ENCODE measurements at regions of chr20 and their contacts with region 1.

Region 1: GRCh38 chr20:50790651-50791277 is 4.1 kb upstream of the BCAS4 start:
- DNase-seq: peak; percentile 85
- H3K4me3 Mint-ChIP-seq: no peak overlapping the region
- H3K27ac Mint-ChIP-seq: peak overlapping the region; percentile 52
- H3K4me1 Mint-ChIP-seq: peaks cover 28% of the 10 kb centered on the region
- H3K27me3 Mint-ChIP-seq: peaks cover 17% of the 10 kb centered on the region

Region 2: DNA sequence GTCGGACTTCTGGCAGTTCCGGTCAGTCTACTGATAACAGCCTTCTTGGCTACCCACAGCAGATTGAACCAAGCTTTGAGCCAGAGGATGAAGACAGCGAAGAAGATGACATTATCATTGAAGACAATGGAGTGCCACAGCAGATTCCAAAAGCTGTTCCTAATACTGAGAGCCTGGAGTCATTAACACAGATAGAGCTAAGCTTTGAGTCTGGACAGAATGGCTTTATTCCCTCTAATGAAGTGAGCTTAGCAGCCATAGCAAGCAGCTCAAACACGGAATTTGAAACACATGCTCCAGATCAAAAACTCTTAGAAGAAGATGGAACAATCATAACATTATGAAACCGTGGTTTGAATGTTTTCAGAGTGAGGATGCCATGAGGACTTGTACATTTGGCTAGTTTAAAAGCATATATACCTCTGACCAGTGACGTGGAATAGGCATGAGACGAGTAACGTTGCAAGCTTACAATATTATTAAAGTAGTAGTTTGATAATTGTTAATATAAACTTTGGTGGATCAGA is 40.6 kb before region 1 on chr20:
- CTCF ChIA-PET with region 1: interaction called, 11 read pairs
- DNase-seq: no peak
- H3K4me3 Mint-ChIP-seq: no peak overlapping the region
- H3K27ac Mint-ChIP-seq: no peak overlapping the region
- H3K4me1 Mint-ChIP-seq: peaks cover 19% of the 10 kb centered on the region
- H3K27me3 Mint-ChIP-seq: no peaks in the 10 kb centered on the region

Region 3: DNA sequence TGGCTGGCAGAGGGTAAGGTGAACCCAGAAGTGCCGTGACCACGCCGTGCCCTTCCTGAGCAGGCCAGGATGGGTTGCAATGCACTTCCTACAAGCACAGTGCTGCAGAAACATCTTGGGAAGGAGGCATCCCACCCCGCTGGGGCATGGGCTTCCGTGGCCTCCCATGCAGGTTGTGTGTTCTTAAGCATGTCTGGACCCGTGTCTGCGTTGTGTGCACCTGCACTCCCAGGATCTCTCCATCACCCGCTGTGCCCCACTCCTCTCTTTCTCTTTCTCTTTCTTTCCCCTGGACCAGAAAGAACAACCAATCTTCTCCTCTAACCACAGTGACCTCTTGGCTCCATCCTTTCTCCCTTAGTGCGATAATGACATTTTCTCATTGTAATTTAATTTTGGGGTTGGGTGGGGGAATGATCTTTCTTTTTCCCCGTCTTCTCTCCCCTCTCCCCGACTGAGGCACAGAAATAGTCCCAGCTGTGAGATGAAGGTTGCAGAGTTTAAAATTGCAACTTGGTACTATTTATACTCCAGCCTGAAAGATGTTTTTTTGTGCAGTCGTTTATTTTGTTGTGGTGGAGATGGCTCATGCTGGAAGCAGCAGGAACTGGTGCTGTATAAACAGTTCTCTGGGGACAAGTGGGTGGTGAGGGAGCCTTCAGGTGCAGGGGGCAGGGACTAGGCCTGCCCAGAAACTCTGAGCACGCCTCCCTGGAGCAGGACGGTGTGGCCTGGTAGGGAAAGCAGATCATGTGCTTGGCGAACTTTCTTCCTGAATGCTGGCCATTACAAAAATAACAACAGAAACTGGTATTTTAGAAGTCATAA is 24.6 kb after region 1 on chr20:
- CTCF ChIA-PET with region 1: interaction called, 16 read pairs
- DNase-seq: peak; percentile 26
- H3K4me3 Mint-ChIP-seq: peak overlapping the region; percentile 46
- H3K27ac Mint-ChIP-seq: peak overlapping the region; percentile 83
- H3K4me1 Mint-ChIP-seq: peaks cover 52% of the 10 kb centered on the region
- H3K27me3 Mint-ChIP-seq: peaks cover 5% of the 10 kb centered on the region

Region 4: DNA sequence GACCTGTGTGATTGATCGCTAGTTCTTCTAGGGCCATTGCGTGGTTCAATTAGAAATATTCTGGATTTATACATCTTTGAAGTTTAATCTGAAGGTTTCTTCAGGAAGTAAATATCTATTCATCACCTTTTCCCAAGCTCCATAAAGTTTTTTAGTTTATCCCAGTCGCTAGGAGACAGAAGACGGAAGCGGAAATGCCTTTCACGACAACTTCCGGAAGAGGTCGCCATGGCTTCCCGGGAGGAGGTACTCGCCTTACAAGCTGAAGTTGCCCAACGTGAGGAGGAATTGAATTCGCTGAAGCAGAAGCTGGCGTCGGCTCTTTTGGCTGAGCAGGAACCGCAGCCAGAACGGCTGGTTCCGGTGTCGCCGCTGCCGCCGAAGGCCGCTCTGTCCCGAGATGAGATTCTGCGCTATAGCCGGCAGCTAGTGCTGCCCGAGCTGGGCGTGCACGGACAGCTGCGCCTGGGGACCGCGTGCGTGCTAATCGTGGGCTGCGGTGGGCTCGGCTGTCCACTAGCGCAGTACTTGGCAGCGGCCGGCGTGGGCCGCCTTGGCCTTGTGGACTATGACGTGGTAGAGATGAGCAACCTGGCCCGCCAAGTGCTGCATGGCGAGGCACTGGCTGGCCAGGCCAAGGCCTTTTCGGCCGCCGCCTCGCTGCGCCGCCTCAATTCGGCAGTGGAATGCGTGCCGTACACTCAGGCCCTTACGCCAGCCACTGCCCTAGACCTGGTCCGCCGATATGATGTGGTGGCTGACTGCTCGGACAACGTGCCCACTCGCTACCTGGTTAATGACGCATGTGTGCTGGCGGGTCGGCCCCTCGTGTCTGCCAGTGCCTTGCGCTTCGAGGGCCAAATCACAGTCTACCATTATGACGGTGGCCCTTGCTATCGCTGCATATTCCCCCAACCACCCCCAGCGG is 168.1 kb after region 1 on chr20 and contains the start of gene MOCS3:
- CTCF ChIA-PET with region 1: interaction called, 19 read pairs
- DNase-seq: peak; percentile 91
- H3K4me3 Mint-ChIP-seq: peak within 1 kb of the TSS; percentile 99
- H3K27ac Mint-ChIP-seq: peak within 1 kb of the TSS; percentile 96
- H3K4me1 Mint-ChIP-seq: peaks cover 58% of the 10 kb centered on the region
- H3K27me3 Mint-ChIP-seq: no peaks in the 10 kb centered on the region

Region 5: GRCh38 chr20:50980851-50981713 is 190.3 kb after region 1 on chr20:
- CTCF ChIA-PET with region 1: interaction called, 22 read pairs
- DNase-seq: peak; percentile 76
- H3K4me3 Mint-ChIP-seq: no peak overlapping the region
- H3K27ac Mint-ChIP-seq: no peak overlapping the region
- H3K4me1 Mint-ChIP-seq: peaks cover 2% of the 10 kb centered on the region
- H3K27me3 Mint-ChIP-seq: peaks cover 60% of the 10 kb centered on the region

Measured in activated naive CD4-positive, alpha-beta T cell treated with anti-CD3 and anti-CD28 coated beads, Interleukin-2, amount 10 ng/mL, durations not matched to agents 7 days and 5 days (primary cell).